Endothelial cell of umbilical vein (primary cell): ENCODE measurements at regions of chr1 and their contacts with region 1.

Region 1: DNA sequence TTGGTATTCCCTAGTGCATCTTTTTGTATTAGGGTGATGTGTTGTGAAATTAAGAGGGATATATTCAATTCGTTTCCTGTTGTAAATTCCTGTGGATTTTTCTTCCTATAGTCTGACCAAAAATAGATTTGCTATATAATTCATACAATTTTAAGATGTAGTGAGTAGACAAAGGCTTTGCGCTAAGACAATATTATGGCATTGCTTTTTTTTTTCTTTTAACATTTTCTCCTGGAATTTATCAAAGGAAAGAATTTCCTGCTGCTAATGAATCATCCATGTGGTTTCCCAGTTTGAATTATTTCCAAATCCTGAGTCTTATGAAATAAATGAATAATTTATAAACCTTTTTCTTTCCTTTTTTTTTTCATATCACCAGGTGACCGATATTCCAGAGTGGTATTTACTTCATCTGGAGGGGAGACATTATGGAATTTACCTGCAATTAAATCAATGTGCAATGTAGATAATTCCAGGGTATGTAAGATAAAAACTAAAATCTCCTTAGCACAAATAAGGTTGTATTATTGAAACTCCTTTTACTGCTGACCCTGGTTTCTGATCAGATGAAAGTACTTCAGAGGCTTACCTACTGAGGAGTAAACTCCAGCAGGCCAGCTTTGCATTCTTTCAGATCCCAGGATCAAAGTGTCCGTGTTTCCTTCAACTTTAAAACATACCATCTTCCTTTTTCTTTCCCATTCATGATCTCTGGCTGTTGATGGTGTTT is 148.4 kb downstream of the TLR5 start:
- DNase-seq: peak; percentile 79
- H3K4me3 ChIP-seq: peak overlapping the region in 1 of 3 experiments; percentile 52
- H3K27ac ChIP-seq: peak overlapping the region; percentile 81
- H3K4me1 ChIP-seq: peaks cover 36% of the 10 kb centered on the region
- H3K27me3 ChIP-seq: no peaks in the 10 kb centered on the region
- CTCF ChIP-seq: no peak
- POLR2A ChIP-seq: no peak

Region 2: DNA sequence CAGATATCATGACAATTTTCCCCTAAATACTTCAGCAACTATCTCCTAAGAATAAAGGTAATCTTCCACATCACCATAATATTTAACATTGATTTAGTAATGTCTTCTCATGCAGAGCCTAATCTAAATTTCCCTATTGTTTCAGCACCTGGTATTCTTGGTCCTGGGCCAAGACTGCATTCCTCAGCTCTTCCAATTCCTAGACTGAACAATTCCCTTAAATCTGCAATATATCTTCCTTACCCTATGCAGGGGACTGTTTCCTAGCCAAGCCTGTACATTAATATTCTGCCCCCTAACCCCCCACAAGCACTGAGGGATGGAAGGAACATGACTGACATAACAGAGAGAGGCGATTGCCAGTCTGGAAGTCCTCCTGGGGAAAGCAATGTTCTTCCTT is 208.6 kb before region 1 on chr1:
- CTCF ChIA-PET with region 1: no interaction called
- POLR2A ChIA-PET with region 1: no interaction called
- dilution Hi-C with region 1: no loop called
- intact Hi-C with region 1: loop called (anchors 2 kb)
- DNase-seq: peak; percentile 79
- H3K4me3 ChIP-seq: no peak overlapping the region
- H3K27ac ChIP-seq: no peak overlapping the region
- H3K4me1 ChIP-seq: peaks cover 26% of the 10 kb centered on the region
- H3K27me3 ChIP-seq: peaks cover 0 to 3% of the 10 kb centered on the region in 2 experiments
- CTCF ChIP-seq: no peak
- POLR2A ChIP-seq: no peak

Region 3: GRCh38 chr1:222892137-222892769 is 102.4 kb before region 1 on chr1:
- CTCF ChIA-PET with region 1: no interaction called
- POLR2A ChIA-PET with region 1: no interaction called
- dilution Hi-C with region 1: no loop called
- intact Hi-C with region 1: loop called (anchors 2 kb)
- DNase-seq: peak; percentile 85
- H3K4me3 ChIP-seq: no peak overlapping the region
- H3K27ac ChIP-seq: peak overlapping the region; percentile 40
- H3K4me1 ChIP-seq: peaks cover 25% of the 10 kb centered on the region
- H3K27me3 ChIP-seq: no peaks in the 10 kb centered on the region
- CTCF ChIP-seq: no peak
- POLR2A ChIP-seq: no peak

Region 4: GRCh38 chr1:222931023-222931422 is 63.6 kb before region 1 on chr1:
- CTCF ChIA-PET with region 1: no interaction called
- POLR2A ChIA-PET with region 1: no interaction called
- dilution Hi-C with region 1: no loop called
- intact Hi-C with region 1: no loop called
- DNase-seq: no peak
- H3K4me3 ChIP-seq: no peak overlapping the region
- H3K27ac ChIP-seq: no peak overlapping the region
- H3K4me1 ChIP-seq: no peaks in the 10 kb centered on the region
- H3K27me3 ChIP-seq: no peaks in the 10 kb centered on the region
- CTCF ChIP-seq: no peak
- POLR2A ChIP-seq: no peak

Region 5: DNA sequence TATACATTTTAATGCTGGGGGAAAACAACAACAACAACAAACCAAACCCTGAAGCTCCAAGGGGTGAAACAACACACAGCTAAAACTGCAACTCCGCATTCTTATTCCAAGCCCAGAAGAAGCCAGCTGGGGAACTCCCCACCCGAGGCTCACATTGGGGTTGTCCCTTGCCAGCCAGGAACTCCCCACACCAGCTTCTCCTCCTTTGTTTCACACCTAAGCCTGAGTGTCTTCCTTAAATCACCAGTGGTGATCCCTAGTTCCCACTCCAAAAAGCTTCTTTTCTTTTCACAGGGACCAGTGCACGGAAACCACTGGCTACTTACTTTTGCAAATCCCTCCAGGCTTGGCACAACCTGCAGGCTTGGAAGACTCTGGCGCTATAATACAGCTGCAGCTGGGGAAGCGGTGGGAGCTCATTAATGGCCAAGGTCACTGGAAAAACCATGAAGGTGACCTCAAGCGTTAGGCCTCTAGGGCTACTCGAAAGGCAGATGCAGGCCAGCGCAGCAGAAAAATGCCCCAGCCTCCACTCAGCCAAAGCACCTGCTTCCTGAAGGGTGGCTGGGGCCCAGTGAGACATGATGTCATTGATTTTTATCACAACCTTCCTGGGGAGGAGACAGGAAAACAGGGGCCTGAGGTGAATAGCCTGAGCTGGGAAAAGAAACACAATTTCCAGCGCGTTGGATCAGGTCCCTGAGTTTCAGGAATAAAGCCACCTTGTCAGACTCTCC is 108.3 kb after region 1 on chr1:
- CTCF ChIA-PET with region 1: no interaction called
- POLR2A ChIA-PET with region 1: no interaction called
- dilution Hi-C with region 1: no loop called
- intact Hi-C with region 1: loop called (anchors 1 kb)
- DNase-seq: peak; percentile 98
- H3K4me3 ChIP-seq: peak overlapping the region in 1 of 3 experiments; percentile 9
- H3K27ac ChIP-seq: peak overlapping the region; percentile 75
- H3K4me1 ChIP-seq: peaks cover 26% of the 10 kb centered on the region
- H3K27me3 ChIP-seq: peaks cover 0 to 3% of the 10 kb centered on the region in 2 experiments
- CTCF ChIP-seq: no peak
- POLR2A ChIP-seq: no peak